ENCODE measurements at regions of chr16 and their contacts with region 1.

Region 1: DNA sequence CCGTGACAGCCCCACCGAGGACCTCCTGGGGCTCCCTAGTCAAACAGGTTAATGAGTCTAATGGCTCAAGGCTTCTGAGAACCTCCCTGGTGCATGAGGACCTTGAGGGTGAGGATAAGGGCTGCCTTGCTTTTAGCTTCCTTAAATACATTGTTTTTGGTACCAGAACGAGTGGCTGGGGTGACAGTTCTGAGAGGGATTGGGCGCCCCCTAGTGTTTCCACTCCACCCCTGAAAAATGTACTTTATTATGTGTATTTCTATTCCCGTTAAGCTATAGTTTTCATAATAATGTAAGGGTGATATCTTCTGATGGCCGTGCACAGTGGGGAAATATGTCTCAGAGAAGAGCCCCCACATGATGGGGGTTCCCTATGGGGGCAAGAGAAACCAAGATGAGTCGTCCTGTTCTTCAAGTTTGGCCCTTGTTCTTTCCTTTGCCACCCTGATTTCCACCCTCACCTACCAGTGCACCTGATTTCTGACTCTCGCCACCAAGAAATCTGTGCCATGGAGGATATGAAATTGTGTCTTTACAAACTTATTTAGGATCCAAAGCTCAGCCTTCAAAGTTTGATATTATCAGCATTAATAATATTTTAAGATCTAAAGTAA is 14.5 kb upstream of the VWA3A start:
- DNase-seq: peak; percentile 49
- ATAC-seq: peak; percentile 60
- H3K4me3 Mint-ChIP-seq: no peak overlapping the region
- H3K27ac Mint-ChIP-seq: no peak overlapping the region
- H3K4me1 Mint-ChIP-seq: no peaks in the 10 kb centered on the region
- H3K27me3 Mint-ChIP-seq: no peaks in the 10 kb centered on the region
- CTCF ChIP-seq: peak; percentile 91

Region 2: GRCh38 chr16:20928774-20929411 is 1148.9 kb before region 1 on chr16:
- CTCF ChIA-PET with region 1: no interaction called
- POLR2A ChIA-PET with region 1: no interaction called
- intact Hi-C with region 1: no loop called
- DNase-seq: no peak
- ATAC-seq: no peak
- H3K4me3 Mint-ChIP-seq: no peak overlapping the region
- H3K27ac Mint-ChIP-seq: no peak overlapping the region
- H3K4me1 Mint-ChIP-seq: no peaks in the 10 kb centered on the region
- H3K27me3 Mint-ChIP-seq: no peaks in the 10 kb centered on the region
- CTCF ChIP-seq: no peak

Region 3: GRCh38 chr16:21952793-21953540 is 124.8 kb before region 1 on chr16 and contains the start of gene UQCRC2:
- CTCF ChIA-PET with region 1: interaction called, 8 read pairs
- POLR2A ChIA-PET with region 1: no interaction called
- intact Hi-C with region 1: loop called (anchors 1 kb)
- DNase-seq: peak; percentile 76
- ATAC-seq: peak; percentile 89
- H3K4me3 Mint-ChIP-seq: peak within 1 kb of the TSS; percentile 98
- H3K27ac Mint-ChIP-seq: peak within 1 kb of the TSS; percentile 98
- H3K4me1 Mint-ChIP-seq: peaks cover 65% of the 10 kb centered on the region
- H3K27me3 Mint-ChIP-seq: no peaks in the 10 kb centered on the region
- CTCF ChIP-seq: no peak
- total RNA-seq, gene UQCRC2: 207 and 230 TPM in 2 replicates

Region 4: DNA sequence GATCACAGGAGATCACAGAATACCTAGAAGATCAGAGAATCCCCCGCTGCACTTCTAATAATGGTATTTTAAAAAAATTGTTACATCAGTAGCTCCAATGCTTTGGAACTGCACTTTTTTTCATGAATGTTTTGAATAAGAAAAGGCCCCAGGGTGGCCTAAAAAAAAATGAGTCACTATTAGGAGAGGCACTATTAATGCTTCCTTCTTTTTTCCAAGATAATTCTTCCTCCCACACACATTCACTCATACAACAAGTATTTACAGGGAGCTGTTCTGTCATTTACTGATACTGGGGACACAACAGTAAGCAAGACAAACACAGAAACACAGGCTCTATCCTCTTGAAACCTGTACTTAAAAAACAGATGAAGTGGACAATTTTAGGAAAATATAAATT is 76.2 kb before region 1 on chr16:
- CTCF ChIA-PET with region 1: interaction called, 232 read pairs
- POLR2A ChIA-PET with region 1: interaction called, 12 read pairs
- intact Hi-C with region 1: loop called (anchors 1 kb)
- DNase-seq: no peak
- ATAC-seq: no peak
- H3K4me3 Mint-ChIP-seq: no peak overlapping the region
- H3K27ac Mint-ChIP-seq: no peak overlapping the region
- H3K4me1 Mint-ChIP-seq: peaks cover 10% of the 10 kb centered on the region
- H3K27me3 Mint-ChIP-seq: no peaks in the 10 kb centered on the region
- CTCF ChIP-seq: no peak

Region 5: GRCh38 chr16:22014271-22014873 is 63.4 kb before region 1 on chr16:
- CTCF ChIA-PET with region 1: interaction called, 31 read pairs
- POLR2A ChIA-PET with region 1: no interaction called
- intact Hi-C with region 1: no loop called
- DNase-seq: no peak
- ATAC-seq: peak; percentile 65
- H3K4me3 Mint-ChIP-seq: no peak overlapping the region
- H3K27ac Mint-ChIP-seq: no peak overlapping the region
- H3K4me1 Mint-ChIP-seq: peaks cover 54% of the 10 kb centered on the region
- H3K27me3 Mint-ChIP-seq: no peaks in the 10 kb centered on the region
- CTCF ChIP-seq: no peak

Region 6: DNA sequence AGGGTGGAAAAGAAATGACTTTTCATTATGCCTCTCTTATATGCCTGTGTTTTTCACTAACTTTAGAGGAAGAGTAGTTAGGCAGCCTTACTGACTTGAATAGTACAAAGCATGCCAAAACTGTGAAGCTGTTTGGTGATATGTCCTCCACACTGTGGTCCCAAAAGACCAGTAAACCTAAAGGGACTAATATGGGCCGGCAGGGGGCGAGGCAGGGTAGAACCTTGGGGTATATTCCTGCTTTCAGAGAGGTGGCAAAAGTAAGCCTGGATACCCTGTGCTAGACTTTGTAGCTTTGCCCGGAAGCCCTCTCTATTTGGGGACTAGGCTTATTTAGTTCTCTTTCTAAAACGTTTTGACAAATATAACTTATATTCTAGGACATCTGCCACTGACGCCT is 21.9 kb before region 1 on chr16:
- CTCF ChIA-PET with region 1: interaction called, 11 read pairs
- POLR2A ChIA-PET with region 1: no interaction called
- intact Hi-C with region 1: no loop called
- DNase-seq: no peak
- ATAC-seq: no peak
- H3K4me3 Mint-ChIP-seq: no peak overlapping the region
- H3K27ac Mint-ChIP-seq: no peak overlapping the region
- H3K4me1 Mint-ChIP-seq: peaks cover 9% of the 10 kb centered on the region
- H3K27me3 Mint-ChIP-seq: no peaks in the 10 kb centered on the region
- CTCF ChIP-seq: no peak

Region 7: GRCh38 chr16:22089910-22090309 is 12.1 kb after region 1 on chr16:
- CTCF ChIA-PET with region 1: interaction called, 14 read pairs
- POLR2A ChIA-PET with region 1: no interaction called
- intact Hi-C with region 1: no loop called
- DNase-seq: no peak
- ATAC-seq: no peak
- H3K4me3 Mint-ChIP-seq: no peak overlapping the region
- H3K27ac Mint-ChIP-seq: no peak overlapping the region
- H3K4me1 Mint-ChIP-seq: peaks cover 2% of the 10 kb centered on the region
- H3K27me3 Mint-ChIP-seq: peaks cover under 1% of the 10 kb centered on the region
- CTCF ChIP-seq: no peak

Region 8: GRCh38 chr16:22314661-22315378 is 237.0 kb after region 1 on chr16:
- CTCF ChIA-PET with region 1: no interaction called
- POLR2A ChIA-PET with region 1: no interaction called
- intact Hi-C with region 1: no loop called
- DNase-seq: no peak
- ATAC-seq: no peak
- H3K4me3 Mint-ChIP-seq: no peak overlapping the region
- H3K27ac Mint-ChIP-seq: no peak overlapping the region
- H3K4me1 Mint-ChIP-seq: no peaks in the 10 kb centered on the region
- H3K27me3 Mint-ChIP-seq: no peaks in the 10 kb centered on the region
- CTCF ChIP-seq: no peak

Measured in activated B cell treated with CpG ODN at 0.5 μM for 24 hours (primary cell).